ENCODE measurements at regions of chr9 and their contacts with region 1.

Region 1: DNA sequence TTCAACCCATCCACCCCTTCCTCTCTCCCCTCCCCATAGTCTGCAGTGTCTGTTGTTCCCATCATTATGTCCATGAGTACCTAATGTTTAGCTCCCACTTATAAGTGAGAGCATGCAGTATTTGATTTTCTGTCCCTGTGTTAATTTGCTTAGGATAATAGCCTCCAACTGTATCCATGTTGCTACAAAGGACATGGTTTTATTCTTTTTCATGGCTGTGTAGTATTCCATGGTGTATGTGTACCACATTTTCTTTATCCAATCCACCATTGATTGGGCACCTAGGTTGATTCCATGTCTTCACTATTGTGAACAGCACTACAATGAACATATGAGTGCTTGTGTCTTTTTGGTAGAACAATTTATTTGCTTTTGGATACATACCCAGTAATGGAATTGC is 187.1 kb downstream of the PCSK5 start:
- DNase-seq: no peak
- H3K4me3 ChIP-seq: no peak overlapping the region
- H3K27ac ChIP-seq: no peak overlapping the region
- H3K4me1 ChIP-seq: no peaks in the 10 kb centered on the region
- H3K27me3 ChIP-seq: no peaks in the 10 kb centered on the region
- CTCF ChIP-seq: no peak
- POLR2A ChIP-seq: no peak

Region 2: GRCh38 chr9:76018235-76018634 is 59.3 kb before region 1 on chr9:
- intact Hi-C with region 1: loop called (anchors 10 kb)
- DNase-seq: peak in 1 of 2 donors; percentile 3
- H3K4me3 ChIP-seq: no peak overlapping the region
- H3K27ac ChIP-seq: no peak overlapping the region
- H3K4me1 ChIP-seq: no peaks in the 10 kb centered on the region
- H3K27me3 ChIP-seq: no peaks in the 10 kb centered on the region
- CTCF ChIP-seq: no peak
- POLR2A ChIP-seq: no peak